ENCODE measurements at regions of chr1 and their contacts with region 1.

Region 1: DNA sequence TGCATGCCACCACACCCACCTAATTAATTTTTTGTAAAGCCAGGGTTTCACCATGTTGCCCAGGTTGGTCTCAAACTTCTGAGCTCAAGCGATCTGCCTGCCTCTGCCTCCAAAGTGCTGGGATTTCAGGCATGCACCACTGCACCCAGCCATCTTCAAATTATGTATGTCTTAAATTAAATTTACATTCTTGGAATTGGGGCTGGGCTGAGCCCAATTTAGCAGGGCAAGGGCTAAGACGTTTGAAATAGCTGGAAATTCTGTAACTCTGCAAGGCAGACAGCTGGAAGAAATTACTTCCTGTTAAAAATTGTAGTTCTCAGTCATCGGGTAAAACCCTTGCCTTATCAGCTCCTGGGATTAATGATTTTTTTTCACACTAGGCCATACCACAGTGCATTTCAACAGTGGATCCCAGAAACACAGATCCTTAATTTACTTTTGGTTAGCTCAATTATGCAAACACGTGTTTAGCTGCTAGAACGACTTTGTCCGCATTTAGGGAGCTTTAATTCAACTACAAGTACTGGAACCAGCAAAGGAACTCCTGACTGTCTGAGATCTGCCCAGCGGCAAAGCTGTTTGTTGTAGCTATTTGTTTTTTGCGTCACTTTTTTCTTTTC is 83.3 kb downstream of the OLFML3 start:
- DNase-seq: no peak
- H3K4me3 ChIP-seq: no peak overlapping the region
- H3K27ac ChIP-seq: no peak overlapping the region
- H3K4me1 ChIP-seq: no peaks in the 10 kb centered on the region
- H3K27me3 ChIP-seq: no peaks in the 10 kb centered on the region
- CTCF ChIP-seq: no peak
- POLR2A ChIP-seq: no peak

Region 2: DNA sequence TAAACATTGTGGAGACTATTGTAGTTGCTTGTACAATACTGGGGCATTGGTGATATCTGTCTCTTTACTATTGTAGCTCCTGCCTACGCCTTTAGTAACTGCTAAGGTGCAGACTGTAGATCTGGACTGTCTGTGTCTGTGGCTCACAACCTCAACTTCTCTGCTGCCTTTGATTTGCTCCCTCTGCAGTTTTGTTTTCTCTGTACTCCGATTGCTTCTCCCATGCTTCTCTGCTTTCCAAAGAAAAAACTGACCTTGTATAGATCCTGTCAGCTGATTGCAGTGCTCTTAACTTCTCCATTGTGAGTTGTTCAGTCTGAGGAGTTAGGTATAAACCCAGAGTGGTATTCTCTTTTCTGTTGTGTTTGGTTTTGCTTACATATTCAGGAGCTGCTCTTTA is 657.0 kb before region 1 on chr1:
- intact Hi-C with region 1: no loop called
- DNase-seq: no peak
- H3K4me3 ChIP-seq: no peak overlapping the region
- H3K27ac ChIP-seq: no peak overlapping the region
- H3K4me1 ChIP-seq: peaks cover 5% of the 10 kb centered on the region
- H3K27me3 ChIP-seq: no peaks in the 10 kb centered on the region
- CTCF ChIP-seq: no peak
- POLR2A ChIP-seq: no peak

Region 3: DNA sequence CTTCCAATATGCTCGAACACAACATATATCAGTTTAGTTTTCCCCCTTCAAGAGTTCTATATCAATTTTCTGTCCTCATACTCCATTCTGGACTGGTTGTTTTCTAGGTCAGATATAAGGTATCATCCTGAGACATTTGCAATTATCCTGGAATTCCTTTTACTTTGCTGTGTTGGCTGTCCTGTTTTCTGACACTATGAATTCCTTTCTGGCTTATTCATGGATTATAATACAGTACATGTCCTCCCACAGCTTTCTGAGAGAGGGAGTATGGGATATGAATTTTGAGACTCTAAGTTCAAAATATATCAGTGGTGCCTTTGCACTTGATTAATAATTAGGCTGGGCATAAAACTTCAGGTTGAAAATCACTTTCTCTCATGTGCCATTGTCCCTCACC is 315.2 kb before region 1 on chr1:
- intact Hi-C with region 1: no loop called
- DNase-seq: no peak
- H3K4me3 ChIP-seq: no peak overlapping the region
- H3K27ac ChIP-seq: no peak overlapping the region
- H3K4me1 ChIP-seq: no peaks in the 10 kb centered on the region
- H3K27me3 ChIP-seq: no peaks in the 10 kb centered on the region
- CTCF ChIP-seq: no peak
- POLR2A ChIP-seq: no peak

Region 4: DNA sequence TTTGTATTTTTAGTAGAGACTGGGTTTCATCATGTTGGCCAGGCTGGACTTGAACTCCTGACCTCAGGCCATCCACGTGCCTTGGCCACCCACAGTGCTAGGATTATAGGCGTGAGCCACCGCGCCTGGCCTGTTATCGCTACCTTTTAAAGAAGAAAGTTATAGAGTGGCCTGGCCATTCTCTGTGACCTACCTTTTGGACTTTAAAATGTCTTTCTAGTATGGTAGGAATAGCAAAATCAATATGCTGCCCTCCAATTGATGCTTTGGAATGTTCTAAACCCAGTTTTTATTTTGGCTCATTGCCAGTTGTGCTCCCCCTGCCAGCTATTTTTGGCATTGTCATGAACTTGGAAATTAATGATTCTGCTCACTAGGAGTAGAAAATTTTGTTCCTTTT is 113.6 kb before region 1 on chr1:
- intact Hi-C with region 1: no loop called
- DNase-seq: no peak
- H3K4me3 ChIP-seq: no peak overlapping the region
- H3K27ac ChIP-seq: peak overlapping the region in 1 of 2 donors; percentile 12
- H3K4me1 ChIP-seq: peaks cover 22% of the 10 kb centered on the region
- H3K27me3 ChIP-seq: no peaks in the 10 kb centered on the region
- CTCF ChIP-seq: peak in 1 of 3 experiments; percentile 35
- POLR2A ChIP-seq: no peak

Region 5: GRCh38 chr1:114081437-114082303 is 19.1 kb after region 1 on chr1:
- intact Hi-C with region 1: loop called (anchors 2 kb)
- DNase-seq: peak; percentile 42
- H3K4me3 ChIP-seq: no peak overlapping the region
- H3K27ac ChIP-seq: no peak overlapping the region
- H3K4me1 ChIP-seq: no peaks in the 10 kb centered on the region
- H3K27me3 ChIP-seq: no peaks in the 10 kb centered on the region
- CTCF ChIP-seq: no peak
- POLR2A ChIP-seq: no peak